Heart left ventricle (tissue), 16 donors: ENCODE measurements at regions of chr14 and their contacts with region 1.

Region 1: GRCh38 chr14:30656190-30656632 is 34.1 kb downstream of the SCFD1 start:
- DNase-seq: peak in 1 of 5 donors; percentile 21
- ATAC-seq: peak in 2 of 4 donors; percentile 49 to 51
- H3K4me3 ChIP-seq: no peak overlapping the region
- H3K27ac ChIP-seq: peak overlapping the region in 1 of 12 donors; percentile 1
- H3K4me1 ChIP-seq: no peaks in the 10 kb centered on the region
- H3K27me3 ChIP-seq: no peaks in the 10 kb centered on the region
- CTCF ChIP-seq: peak; percentile 45 to 73 (median 64)
- POLR2A ChIP-seq: no peak

Region 2: DNA sequence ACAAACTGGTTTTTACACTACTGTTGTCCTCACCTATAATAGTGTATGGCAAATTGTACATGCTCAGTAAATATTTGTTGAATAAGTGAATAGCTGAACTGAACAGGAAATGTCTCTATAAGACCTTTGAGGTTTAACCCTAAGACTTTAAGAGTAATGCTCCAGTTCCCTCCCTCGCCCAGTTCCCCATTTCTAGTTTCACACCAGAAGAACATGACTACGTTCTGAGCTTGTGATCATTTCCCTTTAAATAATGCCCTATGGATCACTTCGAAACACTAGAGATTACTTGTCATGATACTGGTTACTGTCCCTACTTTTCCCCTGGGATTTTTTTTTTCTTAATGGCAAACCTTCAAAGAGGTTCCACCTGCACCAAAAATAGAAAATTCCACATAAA is 797.9 kb before region 1 on chr14:
- intact Hi-C with region 1: no loop called
- DNase-seq: no peak
- ATAC-seq: no peak
- H3K4me3 ChIP-seq: no peak overlapping the region
- H3K27ac ChIP-seq: no peak overlapping the region
- H3K4me1 ChIP-seq: peaks cover 0 to 3% (median 0%) of the 10 kb centered on the region in 12 donors
- H3K27me3 ChIP-seq: no peaks in the 10 kb centered on the region
- CTCF ChIP-seq: no peak
- POLR2A ChIP-seq: no peak

Region 3: DNA sequence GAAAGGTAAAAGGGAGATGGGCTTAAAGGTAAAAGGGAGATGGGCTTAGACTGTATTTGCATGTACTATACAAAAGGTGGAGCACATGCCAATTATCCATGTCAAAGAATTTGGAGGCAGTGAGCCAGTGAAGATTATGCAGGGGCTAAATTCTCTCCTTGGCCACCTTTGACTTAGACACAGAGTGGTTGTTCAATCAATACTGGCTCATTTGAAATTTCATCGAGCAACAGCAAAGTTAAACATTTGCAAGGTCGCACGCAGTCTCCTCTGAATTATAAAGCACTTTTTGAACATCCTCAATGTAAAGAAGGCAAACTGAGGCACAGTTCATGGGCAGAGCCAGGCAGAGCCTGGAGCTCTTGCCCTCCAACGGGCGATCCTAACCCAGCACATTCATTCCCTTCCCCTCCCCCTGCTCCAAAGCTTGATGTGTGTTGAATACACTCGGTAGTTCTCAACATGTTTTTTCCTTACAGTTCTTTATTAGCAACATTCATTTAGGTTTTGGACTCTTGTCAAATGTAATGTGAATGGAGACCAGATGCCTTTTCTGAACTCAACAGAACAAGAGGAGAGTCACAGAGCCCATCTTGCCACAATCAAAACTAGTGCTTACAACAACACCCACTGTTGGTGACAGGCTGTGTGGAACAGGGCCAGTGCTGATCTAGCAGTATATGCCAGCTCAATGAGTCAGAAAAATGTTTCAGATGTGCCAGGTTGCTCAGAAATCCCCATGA is 266.9 kb before region 1 on chr14:
- intact Hi-C with region 1: no loop called
- DNase-seq: peak in 3 of 5 donors; percentile 7 to 50 (median 50)
- ATAC-seq: peak in 3 of 4 donors; percentile 61 to 81 (median 79)
- H3K4me3 ChIP-seq: no peak overlapping the region
- H3K27ac ChIP-seq: no peak overlapping the region
- H3K4me1 ChIP-seq: peaks cover 0 to 4% (median 0%) of the 10 kb centered on the region in 12 donors
- H3K27me3 ChIP-seq: no peaks in the 10 kb centered on the region
- CTCF ChIP-seq: no peak
- POLR2A ChIP-seq: no peak

Region 4: GRCh38 chr14:30706704-30707103 is 50.5 kb after region 1 on chr14:
- intact Hi-C with region 1: loop called in 1 of 10 experiments (anchors 10 kb)
- DNase-seq: no peak
- ATAC-seq: no peak
- H3K4me3 ChIP-seq: no peak overlapping the region
- H3K27ac ChIP-seq: no peak overlapping the region
- H3K4me1 ChIP-seq: no peaks in the 10 kb centered on the region
- H3K27me3 ChIP-seq: no peaks in the 10 kb centered on the region
- CTCF ChIP-seq: no peak
- POLR2A ChIP-seq: no peak

Region 5: GRCh38 chr14:30719137-30719536 is 62.9 kb after region 1 on chr14:
- intact Hi-C with region 1: no loop called
- DNase-seq: no peak
- ATAC-seq: no peak
- H3K4me3 ChIP-seq: no peak overlapping the region
- H3K27ac ChIP-seq: no peak overlapping the region
- H3K4me1 ChIP-seq: peaks cover 0 to 4% (median 0%) of the 10 kb centered on the region in 12 donors
- H3K27me3 ChIP-seq: no peaks in the 10 kb centered on the region
- CTCF ChIP-seq: no peak
- POLR2A ChIP-seq: no peak

Region 6: DNA sequence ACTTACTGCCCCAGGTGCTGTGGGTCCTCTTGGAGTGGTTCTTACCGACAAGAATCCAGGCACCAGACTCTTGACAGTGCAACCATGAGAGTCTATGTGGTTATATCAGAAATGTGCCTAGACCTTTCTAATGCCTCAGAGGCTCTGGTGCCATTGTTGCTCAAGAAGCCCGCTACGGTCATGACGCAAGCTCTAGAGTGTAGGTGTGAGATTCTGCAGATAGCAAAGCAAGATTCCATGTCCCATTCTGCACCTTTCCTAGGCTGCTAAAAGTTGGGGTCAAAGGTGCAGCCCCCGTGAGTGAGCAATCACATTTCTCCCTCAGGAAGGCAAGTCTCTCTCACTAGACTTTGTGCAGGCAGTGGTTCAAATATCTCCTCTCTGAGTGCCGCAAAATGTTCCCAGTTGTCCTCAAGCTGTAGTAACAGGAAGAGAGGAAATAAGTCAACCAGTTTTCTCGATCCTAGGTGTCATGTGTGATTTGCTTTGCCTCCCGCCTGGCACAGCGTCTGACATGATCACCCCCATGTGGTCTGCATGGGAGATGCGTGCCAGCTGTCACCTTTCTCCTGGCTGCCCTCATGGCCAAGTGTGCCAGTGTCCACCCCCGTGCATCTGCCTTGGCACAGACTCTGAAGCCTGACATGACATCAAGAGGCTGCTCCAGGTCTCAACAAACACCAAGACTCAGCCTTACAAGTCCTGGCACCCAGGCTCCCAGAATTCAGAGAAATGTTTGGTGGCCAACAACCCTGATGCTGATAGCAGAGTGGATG is 95.6 kb after region 1 on chr14:
- intact Hi-C with region 1: loop called in 1 of 10 experiments (anchors 5 kb)
- DNase-seq: no peak
- ATAC-seq: no peak
- H3K4me3 ChIP-seq: no peak overlapping the region
- H3K27ac ChIP-seq: no peak overlapping the region
- H3K4me1 ChIP-seq: no peaks in the 10 kb centered on the region
- H3K27me3 ChIP-seq: no peaks in the 10 kb centered on the region
- CTCF ChIP-seq: no peak
- POLR2A ChIP-seq: no peak

Region 7: GRCh38 chr14:30906752-30907658 is 250.8 kb after region 1 on chr14:
- intact Hi-C with region 1: loop called in 4 of 10 experiments (anchors 10 kb)
- DNase-seq: no peak
- ATAC-seq: no peak
- H3K4me3 ChIP-seq: no peak overlapping the region
- H3K27ac ChIP-seq: no peak overlapping the region
- H3K4me1 ChIP-seq: no peaks in the 10 kb centered on the region
- H3K27me3 ChIP-seq: no peaks in the 10 kb centered on the region
- CTCF ChIP-seq: peak in 7 of 12 donors; percentile 7 to 36 (median 26)
- POLR2A ChIP-seq: no peak

Region 8: GRCh38 chr14:30915596-30915995 is 259.4 kb after region 1 on chr14:
- intact Hi-C with region 1: loop called in 1 of 10 experiments (anchors 10 kb)
- DNase-seq: no peak
- ATAC-seq: no peak
- H3K4me3 ChIP-seq: no peak overlapping the region
- H3K27ac ChIP-seq: no peak overlapping the region
- H3K4me1 ChIP-seq: no peaks in the 10 kb centered on the region
- H3K27me3 ChIP-seq: no peaks in the 10 kb centered on the region
- CTCF ChIP-seq: no peak
- POLR2A ChIP-seq: no peak